H1 (cell line): ENCODE measurements at regions of chr9 and their contacts with region 1.

Region 1: DNA sequence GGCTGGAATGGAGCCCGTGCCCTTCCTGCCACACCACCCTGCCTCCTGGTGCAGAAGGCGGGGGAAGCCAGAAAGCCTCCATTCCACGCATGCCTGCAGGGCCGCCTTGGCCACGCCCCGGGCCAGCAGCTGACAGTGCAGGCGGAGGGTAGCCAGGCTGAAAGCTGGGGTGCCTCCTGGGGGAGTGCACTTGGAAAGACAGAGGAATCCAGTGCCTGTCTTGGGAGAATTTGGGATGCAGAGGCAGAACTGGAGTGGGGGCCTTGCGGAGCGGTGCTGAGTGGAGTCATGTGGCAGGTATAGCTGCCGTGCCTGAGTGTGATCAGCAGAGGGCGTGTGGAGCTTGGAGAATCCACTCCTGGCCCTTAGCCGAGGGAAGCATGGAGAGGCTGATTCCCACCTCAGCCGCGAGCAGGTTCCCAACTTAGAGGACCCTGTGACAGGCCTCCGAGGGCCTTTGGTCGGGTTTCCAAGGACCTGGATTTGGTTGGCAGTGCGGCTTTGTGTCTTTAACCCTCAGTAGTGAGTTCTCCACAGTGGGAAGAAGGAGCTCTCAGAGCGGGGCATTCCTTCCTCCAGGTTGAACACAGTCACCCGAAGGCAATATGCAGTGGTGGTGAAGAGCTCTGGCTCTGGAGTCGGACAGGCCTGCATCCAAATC is 9.1 kb upstream of the URM1 start:
- DNase-seq: peak in 1 of 2 experiments; percentile 87
- H3K4me3 ChIP-seq: peak overlapping the region in 1 of 4 experiments; percentile 31; a peak in 3 of 8 replicates
- H3K27ac ChIP-seq: no peak overlapping the region
- H3K4me1 ChIP-seq: peaks cover 5 to 20% (median 10%) of the 10 kb centered on the region in 4 experiments
- H3K27me3 ChIP-seq: peaks cover 23 to 55% (median 42%) of the 10 kb centered on the region in 4 experiments
- CTCF ChIP-seq: peak; percentile 90 to 98 (median 98)
- EP300 ChIP-seq: no peak
- POLR2A ChIP-seq: no peak
- RAD21 ChIP-seq: peak; percentile 96 to 98

Region 2: DNA sequence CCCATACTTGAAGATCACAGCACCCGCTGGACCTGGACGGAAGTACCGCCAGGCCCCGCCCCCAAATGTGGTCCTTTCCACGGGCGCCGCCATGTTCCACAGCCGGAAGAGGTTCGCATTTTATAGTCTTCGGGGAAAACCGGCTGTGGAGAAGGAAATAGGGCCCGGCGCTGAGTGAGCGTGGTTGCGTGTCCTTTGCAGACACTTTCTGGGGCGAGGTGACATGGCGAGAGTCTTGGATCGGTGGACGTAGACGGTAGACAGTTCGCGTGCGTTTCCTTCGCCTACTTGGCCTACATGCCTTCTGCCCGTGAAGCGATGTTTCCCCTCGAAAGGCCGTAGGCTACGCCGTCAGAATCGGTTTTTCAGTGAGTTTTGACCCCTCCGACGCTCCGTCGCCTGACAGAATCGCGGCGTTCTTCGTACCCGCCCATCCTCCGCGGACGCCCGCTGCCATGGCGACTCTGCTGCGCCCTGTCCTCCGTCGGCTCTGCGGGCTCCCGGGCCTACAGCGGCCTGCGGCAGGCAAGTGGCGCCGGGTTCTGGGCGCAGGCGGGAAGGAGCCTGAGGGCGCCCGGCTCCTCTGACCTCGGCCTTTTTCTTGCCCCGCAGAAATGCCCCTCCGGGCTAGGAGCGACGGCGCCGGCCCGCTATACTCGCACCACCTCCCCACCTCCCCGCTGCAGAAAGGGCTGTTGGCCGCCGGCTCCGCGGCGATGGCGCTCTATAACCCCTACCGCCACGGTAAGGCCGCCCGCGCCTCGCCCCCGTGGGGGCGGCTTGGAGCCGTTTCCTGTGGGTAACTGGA is 39.5 kb before region 1 on chr9 and contains the starts of genes COQ4 and TRUB2:
- CTCF ChIA-PET with region 1: interaction called, 12 read pairs
- POLR2A ChIA-PET with region 1: no interaction called
- DNase-seq: peak; percentile 57 to 94
- H3K4me3 ChIP-seq: peak within 1 kb of the TSS; percentile 86 to 100 (median 92)
- H3K27ac ChIP-seq: peak within 1 kb of the TSS; percentile 90
- H3K4me1 ChIP-seq: no peaks in the 10 kb centered on the region; a peak in 3 of 7 replicates
- H3K27me3 ChIP-seq: no peaks in the 10 kb centered on the region
- CTCF ChIP-seq: no peak
- EP300 ChIP-seq: no peak
- POLR2A ChIP-seq: peak; percentile 85 to 94
- RAD21 ChIP-seq: no peak
- total RNA-seq, gene COQ4: 30.2 and 32.3 TPM in 2 replicates
- total RNA-seq, gene TRUB2: 37.8 and 39.7 TPM in 2 replicates

Region 3: DNA sequence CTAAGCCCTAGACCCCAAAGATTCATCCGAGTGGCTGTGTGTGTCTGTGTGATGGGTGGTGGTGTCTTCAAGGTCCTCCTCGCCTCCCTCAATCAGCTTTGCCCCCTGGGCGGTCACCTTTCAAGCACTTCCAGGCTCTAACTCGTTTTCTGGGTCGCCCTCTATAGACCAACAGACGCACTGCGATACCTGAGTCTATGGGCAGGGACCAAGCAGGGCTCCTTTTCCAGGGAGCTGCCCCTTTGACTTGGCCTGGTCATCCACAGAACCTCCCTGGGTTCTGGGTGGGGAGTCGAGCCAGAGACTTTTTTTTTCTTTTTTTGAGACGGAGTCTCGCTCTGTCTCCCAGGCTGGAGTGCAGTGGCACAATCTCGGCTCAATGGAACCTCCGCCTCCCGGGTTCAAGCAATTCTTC is 20.7 kb before region 1 on chr9:
- CTCF ChIA-PET with region 1: interaction called, 127 read pairs
- POLR2A ChIA-PET with region 1: interaction called, 6 read pairs
- DNase-seq: peak in 1 of 2 experiments; percentile 85
- H3K4me3 ChIP-seq: peak overlapping the region; percentile 60 to 90 (median 76); a peak in 7 of 8 replicates
- H3K27ac ChIP-seq: no peak overlapping the region
- H3K4me1 ChIP-seq: peaks cover 0 to 2% (median 0%) of the 10 kb centered on the region in 4 experiments; a peak in 2 of 7 replicates
- H3K27me3 ChIP-seq: no peaks in the 10 kb centered on the region
- CTCF ChIP-seq: peak; percentile 65 to 81 (median 76)
- EP300 ChIP-seq: no peak
- POLR2A ChIP-seq: no peak
- RAD21 ChIP-seq: peak; percentile 57 to 64

Region 4: DNA sequence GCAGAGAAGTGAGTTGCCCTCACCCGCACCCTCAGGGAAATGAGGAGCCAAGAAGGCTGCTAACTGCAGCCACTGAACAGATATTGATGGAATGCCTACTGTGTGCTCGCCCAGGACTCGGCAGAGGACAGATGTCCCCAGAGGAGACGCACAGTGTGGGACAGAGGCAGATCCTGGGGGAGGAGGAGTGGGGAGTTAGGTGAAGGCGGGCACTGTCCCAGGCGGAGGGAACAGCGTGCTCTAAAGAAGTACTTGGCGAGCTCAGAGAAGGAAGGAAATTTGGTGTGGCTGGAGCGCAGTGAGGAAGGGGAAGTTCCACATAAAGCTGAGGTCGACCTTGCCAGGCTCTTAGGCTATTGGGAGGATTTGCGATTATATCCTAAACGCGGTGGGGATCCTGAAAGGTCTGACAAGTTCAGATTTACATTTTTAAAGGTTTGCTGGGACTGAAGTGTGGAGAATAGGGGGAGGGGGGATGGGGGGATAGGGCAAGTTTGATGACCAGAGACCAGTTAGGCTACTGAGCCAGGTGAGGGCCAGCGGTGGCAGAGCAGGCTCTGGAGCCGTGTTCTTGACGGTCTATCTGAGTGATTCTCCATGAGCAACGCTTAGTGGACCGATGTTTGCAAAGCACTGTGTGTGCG is 35.0 kb after region 1 on chr9:
- CTCF ChIA-PET with region 1: interaction called, 544 read pairs
- POLR2A ChIA-PET with region 1: interaction called, 92 read pairs
- DNase-seq: peak in 1 of 2 experiments; percentile 57
- H3K4me3 ChIP-seq: no peak overlapping the region
- H3K27ac ChIP-seq: no peak overlapping the region
- H3K4me1 ChIP-seq: peaks cover 9 to 28% (median 21%) of the 10 kb centered on the region in 4 experiments
- H3K27me3 ChIP-seq: peaks cover 85 to 100% (median 96%) of the 10 kb centered on the region in 4 experiments
- CTCF ChIP-seq: no peak
- EP300 ChIP-seq: peak in 1 of 2 experiments; percentile 43; a peak in 1 of 3 replicates
- POLR2A ChIP-seq: no peak
- RAD21 ChIP-seq: no peak

Region 5: DNA sequence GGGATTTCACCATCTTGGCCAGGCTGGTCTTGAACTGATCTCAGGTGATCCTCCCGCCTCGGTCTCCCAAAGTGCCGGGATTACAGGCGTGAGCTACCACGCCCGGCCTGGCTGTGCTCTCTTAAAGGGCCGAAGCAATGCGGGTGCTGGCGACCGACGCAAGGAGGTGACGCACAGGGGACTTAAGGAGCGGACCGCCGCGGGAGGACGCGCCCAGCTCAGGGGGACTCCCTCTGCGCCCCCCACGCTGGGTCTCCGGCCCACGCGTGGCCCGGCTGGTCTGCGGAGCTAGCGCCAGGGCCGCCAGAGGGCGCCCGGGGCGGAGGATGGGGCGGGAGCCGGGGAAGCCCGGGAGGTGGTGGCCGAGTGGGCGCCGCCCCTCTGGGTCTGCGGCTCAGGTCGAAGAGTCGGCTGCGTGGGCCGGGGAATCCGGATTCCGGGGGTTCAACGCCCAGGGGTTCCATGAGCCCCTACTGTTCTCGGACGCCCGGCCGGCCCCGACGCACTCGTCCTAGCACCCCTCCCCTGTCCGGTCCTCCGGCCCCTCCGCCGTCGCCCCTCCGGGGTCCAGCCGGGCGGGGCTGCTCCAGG is 58.0 kb after region 1 on chr9:
- CTCF ChIA-PET with region 1: interaction called, 544 read pairs
- POLR2A ChIA-PET with region 1: interaction called, 3 read pairs
- DNase-seq: peak in 1 of 2 experiments; percentile 83
- H3K4me3 ChIP-seq: peak overlapping the region; percentile 47 to 89 (median 60)
- H3K27ac ChIP-seq: no peak overlapping the region
- H3K4me1 ChIP-seq: peaks cover 6 to 18% (median 8%) of the 10 kb centered on the region in 4 experiments; a peak in 6 of 7 replicates
- H3K27me3 ChIP-seq: peaks cover 5 to 48% (median 34%) of the 10 kb centered on the region in 4 experiments; a peak in 6 of 7 replicates
- CTCF ChIP-seq: peak in 2 of 3 experiments; percentile 51 to 63; a peak in 3 of 4 replicates
- EP300 ChIP-seq: no peak
- POLR2A ChIP-seq: no peak
- RAD21 ChIP-seq: peak; percentile 20 to 40; a peak in 3 of 4 replicates

Region 6: GRCh38 chr9:128575469-128575868 is 213.4 kb after region 1 on chr9:
- CTCF ChIA-PET with region 1: no interaction called
- POLR2A ChIA-PET with region 1: no interaction called
- DNase-seq: no peak
- H3K4me3 ChIP-seq: no peak overlapping the region
- H3K27ac ChIP-seq: no peak overlapping the region
- H3K4me1 ChIP-seq: no peaks in the 10 kb centered on the region
- H3K27me3 ChIP-seq: peaks cover 0 to 2% (median 0%) of the 10 kb centered on the region in 4 experiments; a peak in 1 of 7 replicates
- CTCF ChIP-seq: no peak
- EP300 ChIP-seq: no peak
- POLR2A ChIP-seq: no peak
- RAD21 ChIP-seq: no peak